ENCODE measurements at regions of chr4 and their contacts with region 1.

Region 1: DNA sequence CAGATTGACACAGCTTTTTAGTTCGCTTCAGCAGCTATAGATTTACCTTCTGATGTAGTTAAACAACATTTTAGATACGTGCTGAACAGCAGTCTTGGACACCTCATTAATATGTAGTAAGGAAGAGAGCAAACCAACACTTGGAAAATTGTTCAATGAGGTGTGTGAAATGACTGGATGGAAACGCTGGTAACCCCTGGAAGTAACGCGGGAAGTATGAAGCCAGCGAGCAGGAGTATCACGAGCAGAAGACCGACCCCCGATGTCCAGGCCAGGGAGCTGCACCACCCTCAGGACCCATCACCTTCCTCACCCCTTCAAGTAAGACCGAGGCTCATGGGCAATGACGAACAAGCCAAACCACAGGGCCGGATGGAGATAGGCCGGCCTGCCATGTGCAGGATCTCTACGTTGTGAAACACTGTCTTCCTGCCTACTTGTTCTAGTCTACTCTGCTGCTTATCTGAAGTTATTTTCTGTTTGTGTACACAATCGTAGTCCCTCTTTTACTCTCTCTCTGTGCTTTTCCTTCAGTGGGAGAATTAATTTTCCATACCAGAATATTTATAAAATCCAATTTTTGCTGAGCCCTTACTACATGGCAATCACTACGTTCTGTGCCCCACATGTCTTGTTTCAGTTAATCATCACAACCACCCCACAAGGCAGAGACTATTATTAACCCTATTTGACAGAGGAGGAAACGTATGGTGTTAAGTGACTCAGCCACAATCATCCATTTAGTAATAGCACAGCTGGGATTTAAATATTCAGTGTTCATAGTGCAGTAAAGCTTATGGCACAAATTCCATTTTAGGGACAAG is 221.7 kb downstream of the APBB2 start:
- DNase-seq: no peak
- ATAC-seq: no peak
- H3K4me3 ChIP-seq: no peak overlapping the region
- H3K27ac ChIP-seq: peak overlapping the region in 1 of 2 donors; percentile 40
- H3K4me1 ChIP-seq: peaks cover 3 to 9% of the 10 kb centered on the region in 2 donors
- H3K27me3 ChIP-seq: no peaks in the 10 kb centered on the region

Region 2: GRCh38 chr4:41044165-41044564 is 51.5 kb after region 1 on chr4:
- intact Hi-C with region 1: loop called in 1 of 2 experiments (anchors 10 kb)
- DNase-seq: no peak
- ATAC-seq: no peak
- H3K4me3 ChIP-seq: no peak overlapping the region
- H3K27ac ChIP-seq: no peak overlapping the region
- H3K4me1 ChIP-seq: no peaks in the 10 kb centered on the region
- H3K27me3 ChIP-seq: no peaks in the 10 kb centered on the region

Region 3: DNA sequence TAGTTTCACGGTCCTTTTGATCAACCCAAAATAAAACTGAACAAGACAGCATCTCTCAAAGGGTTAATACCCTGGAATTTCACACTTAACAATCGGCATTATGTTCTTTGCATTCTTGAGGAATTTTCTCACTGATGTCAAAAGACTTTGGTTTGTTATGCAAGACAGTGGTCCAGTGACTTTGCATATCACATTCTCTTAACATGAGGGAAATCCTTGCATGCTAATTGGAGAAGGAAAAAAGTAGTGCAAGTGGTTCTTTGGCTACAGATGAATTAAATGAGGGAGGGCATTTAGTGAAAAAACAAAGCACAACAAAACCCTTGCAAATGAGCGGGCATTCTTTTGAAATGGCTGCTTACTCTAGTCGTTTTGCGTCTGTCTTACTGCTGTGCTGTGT is 440.2 kb after region 1 on chr4:
- intact Hi-C with region 1: no loop called
- DNase-seq: no peak
- ATAC-seq: no peak
- H3K4me3 ChIP-seq: no peak overlapping the region
- H3K27ac ChIP-seq: no peak overlapping the region
- H3K4me1 ChIP-seq: peaks cover 15 to 24% of the 10 kb centered on the region in 2 donors
- H3K27me3 ChIP-seq: no peaks in the 10 kb centered on the region